Activated CD4-positive, alpha-beta T cell treated with anti-CD3 and anti-CD28 coated beads for 36 hours (primary cell): ENCODE measurements at regions of chr17 and their contacts with region 1.

Region 1: GRCh38 chr17:51921500-51921899 is 237.0 kb downstream of the CA10 start:
- DNase-seq: no peak
- ATAC-seq: no peak
- H3K4me3 Mint-ChIP-seq: no peak overlapping the region
- H3K27ac Mint-ChIP-seq: no peak overlapping the region
- H3K4me1 Mint-ChIP-seq: no peaks in the 10 kb centered on the region
- H3K27me3 Mint-ChIP-seq: peaks cover 4% of the 10 kb centered on the region

Region 2: DNA sequence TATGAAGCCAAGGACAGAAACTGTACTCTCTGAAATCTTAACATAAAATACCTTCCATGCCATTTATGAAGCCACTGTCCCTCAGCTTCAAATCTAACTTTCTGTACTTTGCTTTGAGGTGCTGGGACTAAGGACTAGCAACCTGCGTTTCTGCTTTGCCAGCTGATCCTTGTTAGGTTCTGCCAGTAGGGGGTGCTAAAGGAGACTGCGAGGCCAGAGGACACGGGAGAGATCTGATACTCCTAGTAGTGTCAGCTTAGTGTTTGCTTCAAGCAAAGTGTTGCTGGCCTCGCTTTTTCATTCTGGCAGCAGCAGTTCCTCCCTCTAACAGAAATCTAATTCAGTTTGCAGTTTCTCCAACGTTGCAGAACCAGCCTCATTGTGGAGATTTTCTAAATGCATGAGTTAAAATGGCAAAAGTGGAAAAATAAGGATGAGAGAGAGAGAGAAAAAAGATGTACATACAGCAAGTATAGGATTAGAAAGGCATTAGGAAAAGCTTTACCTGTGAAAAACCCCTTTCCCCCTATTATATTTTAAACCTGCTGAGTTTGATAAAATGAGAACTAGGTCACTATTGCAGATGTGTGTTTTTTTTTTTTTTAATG is 60.4 kb before region 1 on chr17:
- CTCF ChIA-PET with region 1: no interaction called
- POLR2A ChIA-PET with region 1: no interaction called
- intact Hi-C with region 1: loop called in 1 of 2 experiments (anchors 10 kb)
- DNase-seq: peak; percentile 44
- ATAC-seq: no peak
- H3K4me3 Mint-ChIP-seq: no peak overlapping the region
- H3K27ac Mint-ChIP-seq: no peak overlapping the region
- H3K4me1 Mint-ChIP-seq: no peaks in the 10 kb centered on the region
- H3K27me3 Mint-ChIP-seq: peaks cover 4% of the 10 kb centered on the region

Region 3: DNA sequence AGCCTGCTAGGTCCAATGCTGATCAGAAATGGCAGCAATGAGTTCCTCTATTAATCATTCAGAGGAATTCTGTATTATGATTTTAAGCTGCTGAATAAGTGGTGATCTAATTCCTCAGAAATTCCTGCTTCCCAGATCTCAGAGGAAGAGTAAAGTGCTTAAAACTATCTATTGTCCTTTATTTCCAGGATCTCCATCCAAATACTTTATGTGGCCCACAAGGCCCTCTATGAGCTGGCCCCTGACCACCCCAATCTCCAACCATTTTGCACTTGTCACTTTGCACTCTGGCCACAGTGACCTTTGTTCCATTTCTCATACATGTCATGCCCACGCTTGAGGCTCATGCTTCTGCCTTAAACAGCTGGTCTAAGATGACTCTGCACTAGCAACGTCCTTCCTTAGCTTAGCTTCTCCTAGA is 143.3 kb after region 1 on chr17:
- CTCF ChIA-PET with region 1: no interaction called
- POLR2A ChIA-PET with region 1: no interaction called
- intact Hi-C with region 1: no loop called
- DNase-seq: no peak
- ATAC-seq: no peak
- H3K4me3 Mint-ChIP-seq: no peak overlapping the region
- H3K27ac Mint-ChIP-seq: no peak overlapping the region
- H3K4me1 Mint-ChIP-seq: no peaks in the 10 kb centered on the region
- H3K27me3 Mint-ChIP-seq: no peaks in the 10 kb centered on the region